ENCODE measurements at regions of chr16 and their contacts with region 1.

Region 1: DNA sequence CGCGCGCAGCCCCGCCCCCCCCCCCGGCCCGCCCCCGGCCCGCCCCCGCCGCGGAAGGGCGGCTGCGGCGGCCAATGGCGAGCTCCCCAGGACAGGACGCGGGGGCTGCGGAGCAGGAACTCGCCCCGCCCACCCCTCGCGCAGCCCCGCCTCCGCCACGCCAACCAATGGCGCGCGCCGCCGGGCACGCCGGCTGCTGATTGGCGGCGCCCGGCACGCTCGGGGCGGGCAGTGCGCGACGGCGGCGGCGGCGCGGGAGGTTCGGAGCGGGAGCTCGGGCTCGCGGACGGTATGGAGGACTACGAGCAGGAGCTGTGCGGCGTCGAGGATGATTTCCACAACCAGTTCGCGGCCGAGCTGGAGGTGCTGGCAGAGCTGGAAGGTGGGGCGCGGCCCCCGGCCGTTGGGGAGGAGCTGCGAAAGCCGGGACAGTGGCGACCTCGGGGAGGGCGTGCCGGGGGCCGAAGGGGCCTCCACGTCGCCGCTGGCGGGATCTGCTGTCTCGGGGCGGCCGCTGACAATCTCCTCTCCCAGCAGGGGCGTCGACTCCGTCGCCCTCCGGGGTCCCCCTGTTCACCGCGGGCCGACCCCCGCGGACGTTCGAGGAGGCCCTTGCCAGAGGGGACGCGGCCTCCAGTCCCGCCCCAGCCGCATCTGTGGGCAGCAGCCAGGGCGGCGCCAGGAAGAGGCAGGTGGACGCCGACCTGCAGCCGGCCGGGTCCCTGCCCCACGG is at the start of gene CHTF18:
- DNase-seq: peak; percentile 90
- H3K4me3 ChIP-seq: peak within 1 kb of the TSS; percentile 87 to 98 (median 94)
- H3K27ac ChIP-seq: peak within 1 kb of the TSS; percentile 16
- H3K4me1 ChIP-seq: peaks cover 23% of the 10 kb centered on the region
- H3K27me3 ChIP-seq: no peaks in the 10 kb centered on the region
- CTCF ChIP-seq: no peak
- total RNA-seq, gene CHTF18: 7.7 to 54.5 TPM

Region 2: DNA sequence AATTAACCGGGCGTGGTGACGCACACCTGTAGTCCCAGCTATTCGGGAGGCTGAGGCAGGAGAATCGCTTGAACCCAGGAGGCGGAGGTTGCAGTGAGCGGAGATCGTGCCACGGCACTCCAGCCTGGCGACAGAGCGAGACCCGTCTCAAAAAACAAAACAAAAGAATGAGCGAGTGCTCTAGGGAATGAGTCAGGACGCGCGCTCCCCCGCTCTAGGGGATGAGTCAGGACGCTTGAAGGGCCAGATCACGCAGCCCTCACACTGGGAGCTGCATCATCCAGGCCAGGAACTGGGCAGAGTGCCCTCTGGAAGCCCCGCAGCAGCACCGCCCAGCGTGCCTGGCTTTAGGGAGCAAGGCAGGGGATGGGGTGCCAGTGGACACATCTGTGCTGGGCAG is 161.8 kb before region 1 on chr16:
- CTCF ChIA-PET with region 1: no interaction called
- dilution Hi-C with region 1: loop called (anchors 5 kb)
- in situ Hi-C with region 1: no loop called
- intact Hi-C with region 1: no loop called
- DNase-seq: peak; percentile 82
- H3K4me3 ChIP-seq: no peak overlapping the region
- H3K27ac ChIP-seq: no peak overlapping the region
- H3K4me1 ChIP-seq: peaks cover 42% of the 10 kb centered on the region
- H3K27me3 ChIP-seq: no peaks in the 10 kb centered on the region
- CTCF ChIP-seq: no peak

Region 3: GRCh38 chr16:728131-728889 is 60.2 kb before region 1 on chr16:
- CTCF ChIA-PET with region 1: interaction called, 7 read pairs
- dilution Hi-C with region 1: no loop called
- in situ Hi-C with region 1: no loop called
- intact Hi-C with region 1: loop called (anchors 1 kb)
- DNase-seq: peak; percentile 82
- H3K4me3 ChIP-seq: peak overlapping the region in 2 of 3 experiments; percentile 62 to 71
- H3K27ac ChIP-seq: no peak overlapping the region
- H3K4me1 ChIP-seq: peaks cover 19% of the 10 kb centered on the region
- H3K27me3 ChIP-seq: no peaks in the 10 kb centered on the region
- CTCF ChIP-seq: no peak

Region 4: DNA sequence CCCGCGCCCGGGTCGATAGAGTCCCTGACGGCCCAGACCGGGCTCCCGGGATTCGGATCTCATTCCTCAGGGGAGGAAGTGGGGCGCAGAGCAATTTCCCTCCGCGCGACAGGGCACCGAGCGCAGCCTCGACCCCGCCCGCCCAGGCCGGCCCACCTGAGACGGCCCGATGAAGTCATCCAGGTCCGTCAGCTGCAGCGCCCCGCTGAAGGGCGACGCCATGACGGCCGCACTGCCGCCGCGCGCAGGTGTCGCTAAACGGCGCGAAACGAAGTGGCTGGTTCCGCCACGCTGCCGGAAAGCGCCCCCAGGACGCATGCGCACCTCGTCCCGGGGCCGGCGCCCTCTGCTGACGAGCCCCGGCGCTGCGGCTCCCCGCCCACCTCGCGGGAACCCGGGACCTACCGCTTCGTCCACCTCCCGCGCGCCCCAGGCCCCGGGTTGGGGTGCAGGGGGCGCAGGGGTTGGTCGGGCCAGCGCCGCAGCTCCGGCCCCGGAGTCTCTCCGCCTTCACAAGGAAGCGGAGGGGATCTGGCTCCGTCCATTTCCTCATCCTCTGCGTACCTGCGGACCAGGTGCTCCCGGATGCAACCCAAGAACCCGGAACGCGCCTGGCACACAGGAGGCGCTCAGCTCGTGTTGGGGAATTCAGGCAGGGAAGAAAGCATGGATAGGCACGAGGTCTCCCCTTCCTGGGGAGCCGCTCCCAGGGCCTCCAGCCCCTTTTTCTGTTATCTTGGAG is 47.6 kb before region 1 on chr16 and contains the start of gene CIAO3:
- CTCF ChIA-PET with region 1: no interaction called
- dilution Hi-C with region 1: no loop called
- in situ Hi-C with region 1: loop called in 1 of 2 experiments (anchors 5 kb)
- intact Hi-C with region 1: loop called (anchors 1 kb)
- DNase-seq: peak; percentile 89
- H3K4me3 ChIP-seq: peak within 1 kb of the TSS; percentile 84 to 99 (median 95)
- H3K27ac ChIP-seq: peak within 1 kb of the TSS; percentile 62
- H3K4me1 ChIP-seq: peaks cover 8% of the 10 kb centered on the region
- H3K27me3 ChIP-seq: no peaks in the 10 kb centered on the region
- CTCF ChIP-seq: peak; percentile 61 to 81
- total RNA-seq, gene CIAO3: 28.7 to 28.8 TPM

Region 5: GRCh38 chr16:807347-808084 is 19.0 kb after region 1 on chr16:
- CTCF ChIA-PET with region 1: no interaction called
- dilution Hi-C with region 1: no loop called
- in situ Hi-C with region 1: no loop called
- intact Hi-C with region 1: loop called (anchors 2 kb)
- DNase-seq: peak; percentile 85
- H3K4me3 ChIP-seq: peak overlapping the region; percentile 62 to 69 (median 64)
- H3K27ac ChIP-seq: peak overlapping the region; percentile 62
- H3K4me1 ChIP-seq: no peaks in the 10 kb centered on the region
- H3K27me3 ChIP-seq: peaks cover 2% of the 10 kb centered on the region
- CTCF ChIP-seq: no peak

Region 6: GRCh38 chr16:832652-833336 is 44.2 kb after region 1 on chr16:
- CTCF ChIA-PET with region 1: no interaction called
- dilution Hi-C with region 1: loop called (anchors 10 kb)
- in situ Hi-C with region 1: no loop called
- intact Hi-C with region 1: no loop called
- DNase-seq: no peak
- H3K4me3 ChIP-seq: no peak overlapping the region
- H3K27ac ChIP-seq: no peak overlapping the region
- H3K4me1 ChIP-seq: no peaks in the 10 kb centered on the region
- H3K27me3 ChIP-seq: no peaks in the 10 kb centered on the region
- CTCF ChIP-seq: no peak

Region 7: DNA sequence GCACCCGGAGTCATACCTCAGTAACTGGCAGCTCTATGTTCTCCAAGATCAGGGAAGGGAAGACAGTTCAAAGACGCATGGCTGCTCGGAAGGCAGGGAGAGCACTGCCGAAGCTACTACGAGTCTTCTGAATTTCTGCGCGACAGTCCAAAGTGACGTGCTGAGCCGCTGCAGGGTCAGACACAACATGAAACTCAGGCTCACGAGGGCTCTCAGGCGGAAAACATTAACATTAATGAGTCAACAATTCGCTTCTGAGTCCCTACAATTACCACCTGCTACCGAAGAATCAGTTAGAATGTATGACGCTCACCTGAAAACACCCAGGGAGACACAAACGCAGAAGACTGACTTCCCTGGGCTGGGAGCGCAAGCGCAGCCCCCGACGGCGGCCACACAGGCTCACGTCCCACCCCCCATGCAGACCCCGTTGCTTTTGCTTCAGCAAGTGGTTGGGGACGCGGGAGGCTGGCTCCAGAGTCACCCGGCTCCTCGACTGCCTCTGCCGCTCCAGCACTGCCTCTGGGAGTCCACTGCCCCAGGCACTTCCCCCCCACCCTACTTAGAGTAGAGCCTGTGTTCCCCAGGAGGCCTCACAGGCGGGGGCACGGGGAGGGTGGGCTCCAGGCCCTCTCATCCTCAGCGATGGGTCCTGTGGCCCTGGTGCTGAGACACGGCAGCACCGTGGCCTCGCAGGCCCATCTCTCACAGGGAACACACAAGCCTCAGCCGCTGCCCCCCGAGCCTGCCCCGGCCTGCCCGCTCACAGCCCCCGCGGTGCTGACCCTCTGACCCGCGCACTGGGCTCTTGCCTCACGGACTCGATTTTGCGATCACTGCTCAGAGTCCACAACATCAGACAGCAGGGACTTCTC is 143.3 kb after region 1 on chr16:
- CTCF ChIA-PET with region 1: no interaction called
- dilution Hi-C with region 1: no loop called
- in situ Hi-C with region 1: no loop called
- intact Hi-C with region 1: no loop called
- DNase-seq: no peak
- H3K4me3 ChIP-seq: no peak overlapping the region
- H3K27ac ChIP-seq: no peak overlapping the region
- H3K4me1 ChIP-seq: no peaks in the 10 kb centered on the region
- H3K27me3 ChIP-seq: no peaks in the 10 kb centered on the region
- CTCF ChIP-seq: no peak

Region 8: GRCh38 chr16:951660-952301 is 163.2 kb after region 1 on chr16:
- CTCF ChIA-PET with region 1: no interaction called
- dilution Hi-C with region 1: no loop called
- in situ Hi-C with region 1: no loop called
- intact Hi-C with region 1: no loop called
- DNase-seq: no peak
- H3K4me3 ChIP-seq: no peak overlapping the region
- H3K27ac ChIP-seq: no peak overlapping the region
- H3K4me1 ChIP-seq: no peaks in the 10 kb centered on the region
- H3K27me3 ChIP-seq: no peaks in the 10 kb centered on the region
- CTCF ChIP-seq: no peak

Region 9: GRCh38 chr16:1119766-1120576 is 331.4 kb after region 1 on chr16:
- CTCF ChIA-PET with region 1: no interaction called
- dilution Hi-C with region 1: loop called (anchors 10 kb)
- in situ Hi-C with region 1: no loop called
- intact Hi-C with region 1: no loop called
- DNase-seq: no peak
- H3K4me3 ChIP-seq: no peak overlapping the region
- H3K27ac ChIP-seq: no peak overlapping the region
- H3K4me1 ChIP-seq: peaks cover 3% of the 10 kb centered on the region
- H3K27me3 ChIP-seq: no peaks in the 10 kb centered on the region
- CTCF ChIP-seq: no peak

Region 10: DNA sequence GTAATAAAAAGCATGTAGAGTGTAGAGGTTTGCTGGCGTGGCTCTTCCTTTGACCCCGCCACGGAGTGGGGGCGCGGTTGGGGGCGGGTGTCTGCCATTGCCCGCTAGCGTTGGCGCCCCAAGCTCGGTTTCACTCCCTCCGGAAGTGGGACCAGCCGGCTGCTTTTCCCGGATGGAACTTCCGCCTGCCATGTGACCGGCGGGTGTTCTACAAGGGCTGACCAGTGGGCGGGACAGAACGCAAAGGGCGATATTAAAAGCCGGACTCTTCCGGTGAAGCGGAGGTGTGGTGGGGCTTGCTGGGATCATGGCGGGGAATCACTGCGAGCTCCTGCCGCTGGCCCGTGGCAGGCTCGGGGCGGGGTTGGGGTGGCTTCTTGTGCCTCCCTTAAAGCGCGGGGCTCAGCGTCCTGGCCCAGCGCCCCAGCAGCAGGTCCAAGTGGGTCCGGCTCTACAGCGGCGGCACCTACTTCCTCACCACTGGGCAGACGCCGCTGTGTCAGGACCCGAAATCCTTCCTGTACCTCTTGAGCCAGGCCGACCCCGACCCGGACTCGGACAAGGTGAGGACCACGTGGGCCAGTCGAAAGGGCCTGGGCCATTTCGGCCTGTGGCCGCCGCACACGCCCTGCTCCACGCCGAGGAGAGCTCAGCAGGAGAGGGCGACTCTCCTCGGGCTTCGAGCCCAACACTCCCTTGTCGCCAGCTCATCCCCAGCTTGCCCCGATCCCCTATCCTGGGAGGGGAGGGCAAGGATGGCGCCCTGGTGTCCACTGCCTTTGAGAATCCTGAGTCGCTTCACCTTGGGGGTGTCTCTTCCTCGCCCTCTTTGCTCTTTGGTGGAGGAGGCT is 1814.8 kb after region 1 on chr16:
- CTCF ChIA-PET with region 1: no interaction called
- dilution Hi-C with region 1: no loop called
- in situ Hi-C with region 1: no loop called
- intact Hi-C with region 1: no loop called
- DNase-seq: peak; percentile 94
- H3K4me3 ChIP-seq: peak overlapping the region; percentile 75 to 100 (median 99)
- H3K27ac ChIP-seq: peak overlapping the region; percentile 50
- H3K4me1 ChIP-seq: no peaks in the 10 kb centered on the region
- H3K27me3 ChIP-seq: no peaks in the 10 kb centered on the region
- CTCF ChIP-seq: no peak